WTC11 (cell line): ENCODE measurements at regions of chr2 and their contacts with region 1.

Region 1: GRCh38 chr2:200509612-200510433 is at the start of gene KCTD18:
- DNase-seq: peak; percentile 91
- ATAC-seq: peak; percentile 95
- H3K4me3 Mint-ChIP-seq: peak within 1 kb of the TSS; percentile 77
- H3K27ac Mint-ChIP-seq: peak within 1 kb of the TSS; percentile 13; the same call in 1 of the 2 replicates
- H3K4me1 Mint-ChIP-seq: peaks cover 10% of the 10 kb centered on the region
- H3K27me3 Mint-ChIP-seq: no peaks in the 10 kb centered on the region
- CTCF ChIP-seq: peak; percentile 66; the same call in 1 of the 2 replicates
- total RNA-seq, gene KCTD18: 4.9 to 6.7 TPM (median 5.7 TPM) in 3 replicates

Region 2: GRCh38 chr2:200042102-200042735 is 467.6 kb before region 1 on chr2:
- CTCF ChIA-PET with region 1: no interaction called
- POLR2A ChIA-PET with region 1: no interaction called
- DNase-seq: no peak
- ATAC-seq: no peak
- H3K4me3 Mint-ChIP-seq: no peak overlapping the region
- H3K27ac Mint-ChIP-seq: no peak overlapping the region
- H3K4me1 Mint-ChIP-seq: peaks cover 17% of the 10 kb centered on the region
- H3K27me3 Mint-ChIP-seq: peaks cover 3% of the 10 kb centered on the region; the same call in 1 of the 2 replicates
- CTCF ChIP-seq: no peak

Region 3: DNA sequence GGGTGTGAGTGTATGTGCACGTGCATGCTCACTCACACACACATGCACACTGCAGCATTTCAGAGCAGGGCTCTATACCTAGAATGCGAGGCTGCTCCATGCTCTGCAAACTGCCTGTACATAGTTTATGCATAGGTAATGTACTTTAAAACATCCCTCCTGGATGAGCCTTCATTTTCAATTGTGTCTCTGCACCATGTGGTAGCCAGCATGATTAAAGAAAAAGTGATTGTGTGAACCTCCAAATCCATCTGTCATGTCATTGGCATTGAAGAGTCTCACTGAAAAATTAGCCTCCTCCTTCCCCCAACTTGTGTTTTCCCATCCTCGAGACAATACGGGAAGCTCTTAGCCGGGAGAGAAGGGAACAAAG is 324.2 kb before region 1 on chr2:
- CTCF ChIA-PET with region 1: no interaction called
- POLR2A ChIA-PET with region 1: no interaction called
- DNase-seq: no peak
- ATAC-seq: no peak
- H3K4me3 Mint-ChIP-seq: no peak overlapping the region
- H3K27ac Mint-ChIP-seq: no peak overlapping the region
- H3K4me1 Mint-ChIP-seq: peaks cover 22% of the 10 kb centered on the region
- H3K27me3 Mint-ChIP-seq: no peaks in the 10 kb centered on the region
- CTCF ChIP-seq: no peak

Region 4: DNA sequence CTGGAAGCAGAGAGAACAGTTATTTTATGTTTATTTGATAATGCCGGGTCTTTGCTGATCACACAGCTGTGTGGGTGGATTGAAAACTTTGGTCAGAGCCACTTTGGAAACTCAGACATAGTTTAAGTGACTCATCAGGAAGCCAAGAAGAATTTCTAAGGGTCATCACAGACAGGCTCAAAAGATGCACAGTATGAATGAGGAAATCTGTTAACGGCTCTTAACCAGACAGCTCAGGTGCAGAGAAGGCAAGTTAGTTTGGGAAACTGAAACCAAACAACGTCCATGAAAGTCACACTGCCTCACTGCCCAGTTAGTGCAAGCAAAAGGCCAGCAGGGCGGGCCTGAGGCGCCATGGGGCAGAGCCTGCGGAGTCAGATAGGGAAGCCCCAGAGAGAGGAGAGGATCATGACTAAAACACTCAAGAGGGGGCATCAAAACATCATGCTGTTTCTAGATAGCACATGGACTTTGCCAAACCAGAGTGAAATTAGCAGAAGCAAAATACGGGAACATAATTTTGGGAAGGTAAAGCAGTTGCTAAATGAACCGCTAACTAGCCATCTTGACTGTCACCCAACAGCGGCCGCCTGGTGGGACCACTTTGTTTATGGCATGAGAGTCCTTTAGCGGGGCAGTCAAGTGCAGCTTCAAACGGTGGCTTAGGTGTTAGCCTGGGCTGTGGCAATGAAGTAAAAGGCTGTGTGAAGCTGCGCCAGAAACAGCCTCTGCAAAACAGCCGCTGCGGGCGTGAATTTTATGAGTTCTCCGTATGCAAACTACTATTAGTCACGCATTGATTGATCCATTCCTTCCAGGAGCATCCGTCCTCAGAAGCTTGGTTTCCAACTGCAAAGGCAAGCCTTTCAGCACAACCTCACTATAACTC is 101.2 kb before region 1 on chr2:
- CTCF ChIA-PET with region 1: no interaction called
- POLR2A ChIA-PET with region 1: no interaction called
- DNase-seq: no peak
- ATAC-seq: peak; percentile 46
- H3K4me3 Mint-ChIP-seq: no peak overlapping the region
- H3K27ac Mint-ChIP-seq: peak overlapping the region; percentile 49
- H3K4me1 Mint-ChIP-seq: peaks cover 66% of the 10 kb centered on the region
- H3K27me3 Mint-ChIP-seq: no peaks in the 10 kb centered on the region
- CTCF ChIP-seq: no peak

Region 5: DNA sequence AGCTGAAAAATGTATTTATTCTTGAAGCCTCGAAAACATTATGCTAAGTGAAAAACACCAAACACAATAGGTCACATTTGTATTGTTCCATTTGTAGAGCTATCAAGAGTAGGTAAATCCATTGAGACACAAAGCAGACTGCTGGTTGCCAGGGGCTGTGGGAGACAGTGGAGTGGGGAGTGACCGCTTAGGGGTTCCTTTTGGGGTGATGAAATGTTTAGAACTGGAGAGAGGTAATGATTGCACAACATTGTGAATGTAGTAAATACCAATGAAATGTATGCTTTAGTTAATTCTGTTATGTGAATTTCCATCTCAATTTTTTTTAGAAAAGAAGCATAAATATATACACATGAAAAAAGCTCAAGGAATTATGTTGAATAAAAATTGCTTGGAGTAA is 15.8 kb before region 1 on chr2:
- CTCF ChIA-PET with region 1: interaction called, 11 read pairs
- POLR2A ChIA-PET with region 1: no interaction called
- DNase-seq: no peak
- ATAC-seq: no peak
- H3K4me3 Mint-ChIP-seq: no peak overlapping the region
- H3K27ac Mint-ChIP-seq: no peak overlapping the region
- H3K4me1 Mint-ChIP-seq: no peaks in the 10 kb centered on the region
- H3K27me3 Mint-ChIP-seq: no peaks in the 10 kb centered on the region
- CTCF ChIP-seq: no peak

Region 6: GRCh38 chr2:200525882-200526651 is 16.2 kb after region 1 on chr2 and contains the start of gene SGO2:
- CTCF ChIA-PET with region 1: interaction called, 12 read pairs
- POLR2A ChIA-PET with region 1: no interaction called
- DNase-seq: peak; percentile 95
- ATAC-seq: peak; percentile 99
- H3K4me3 Mint-ChIP-seq: peak within 1 kb of the TSS; percentile 92
- H3K27ac Mint-ChIP-seq: peak within 1 kb of the TSS; percentile 3
- H3K4me1 Mint-ChIP-seq: peaks cover 22% of the 10 kb centered on the region
- H3K27me3 Mint-ChIP-seq: peaks cover 11% of the 10 kb centered on the region
- CTCF ChIP-seq: no peak
- total RNA-seq, gene SGO2: 29.9 to 34.1 TPM (median 30.5 TPM) in 3 replicates

Region 7: DNA sequence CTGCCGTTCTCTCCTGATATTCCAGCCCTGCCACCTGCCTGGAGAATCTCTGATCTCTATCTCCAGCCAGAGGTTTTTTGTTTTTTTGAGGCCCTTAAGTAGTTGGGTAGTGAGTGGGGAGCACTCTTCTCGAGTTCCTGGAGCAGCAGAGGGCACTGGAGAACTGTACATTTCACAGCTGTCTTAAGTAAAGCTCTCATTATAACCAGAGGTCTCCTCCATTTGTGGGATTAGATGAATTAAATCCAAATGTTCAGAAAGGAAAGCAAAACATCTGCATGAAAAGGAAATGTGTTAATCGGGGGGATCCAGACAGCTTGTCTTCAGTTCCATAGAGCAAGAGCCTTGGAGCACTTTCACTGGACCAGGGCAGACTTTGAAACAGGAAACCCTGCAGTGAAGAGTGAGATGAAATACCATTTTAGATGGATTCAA is 108.8 kb after region 1 on chr2:
- CTCF ChIA-PET with region 1: no interaction called
- POLR2A ChIA-PET with region 1: no interaction called
- DNase-seq: no peak
- ATAC-seq: peak; percentile 24; the same call in 1 of the 2 replicates
- H3K4me3 Mint-ChIP-seq: no peak overlapping the region
- H3K27ac Mint-ChIP-seq: no peak overlapping the region
- H3K4me1 Mint-ChIP-seq: no peaks in the 10 kb centered on the region
- H3K27me3 Mint-ChIP-seq: no peaks in the 10 kb centered on the region; the same call in 1 of the 2 replicates
- CTCF ChIP-seq: no peak